ENCODE measurements at regions of chr17 and their contacts with region 1.

Region 1: GRCh38 chr17:40362696-40363110 is 1.8 kb downstream of the GJD3 start:
- DNase-seq: no peak
- ATAC-seq: peak; percentile 95
- H3K4me3 ChIP-seq: peak overlapping the region; percentile 65; the same call in 1 of the 2 replicates
- H3K27ac ChIP-seq: no peak overlapping the region
- H3K4me1 ChIP-seq: no peaks in the 10 kb centered on the region; the same call in none of the 2 replicates
- H3K27me3 ChIP-seq: peaks cover 0 to 2% of the 10 kb centered on the region in 2 experiments; a peak in 1 of 4 replicates
- CTCF ChIP-seq: peak; percentile 85
- EP300 ChIP-seq: no peak
- POLR2A ChIP-seq: peak; percentile 78
- RAD21 ChIP-seq: peak; percentile 64

Region 2: DNA sequence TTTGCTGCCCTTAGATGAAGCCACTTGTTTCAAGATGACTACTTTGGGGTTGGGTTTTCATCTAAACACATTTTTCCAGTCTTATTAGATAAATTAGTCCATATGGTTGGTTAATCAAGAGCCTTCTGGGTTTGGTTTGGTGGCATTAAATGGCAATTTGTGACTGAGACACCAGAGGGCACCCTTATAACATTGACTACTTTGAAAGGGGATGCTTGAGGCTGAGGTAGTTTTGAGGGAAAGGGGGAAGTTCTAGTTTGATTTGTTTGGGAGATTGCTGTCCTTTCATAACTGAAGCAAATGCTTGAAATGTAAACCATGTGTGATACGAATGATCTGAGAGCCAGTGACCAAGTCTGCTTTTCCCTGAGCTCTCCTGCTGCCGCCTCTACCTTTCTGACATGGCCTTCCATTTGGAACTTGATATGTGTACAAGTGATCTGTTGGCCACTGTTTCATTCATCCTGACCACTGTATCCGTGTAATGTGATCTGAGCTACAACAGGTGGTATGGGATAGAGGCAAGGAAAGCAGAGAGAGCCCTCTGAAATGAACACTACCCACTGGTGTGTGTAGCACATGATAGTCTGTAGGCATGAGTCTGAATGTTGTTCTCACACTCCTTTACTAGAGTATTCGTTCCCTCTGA is 59.6 kb before region 1 on chr17:
- CTCF ChIA-PET with region 1: interaction called, 311 read pairs
- POLR2A ChIA-PET with region 1: interaction called, 10 read pairs
- RAD21 ChIA-PET with region 1: interaction called, 271 read pairs
- SMC1A ChIA-PET with region 1: interaction called, 7 read pairs
- in situ Hi-C with region 1: no loop called
- intact Hi-C with region 1: no loop called
- DNase-seq: no peak
- ATAC-seq: peak; percentile 83
- H3K4me3 ChIP-seq: no peak overlapping the region
- H3K27ac ChIP-seq: no peak overlapping the region
- H3K4me1 ChIP-seq: peaks cover 5% of the 10 kb centered on the region; the same call in 1 of the 2 replicates
- H3K27me3 ChIP-seq: no peaks in the 10 kb centered on the region
- CTCF ChIP-seq: peak; percentile 62 to 80 (median 68); a peak in 5 of 6 replicates
- EP300 ChIP-seq: no peak
- POLR2A ChIP-seq: no peak; the same call in 1 of the 2 replicates
- RAD21 ChIP-seq: peak; percentile 96

Region 3: DNA sequence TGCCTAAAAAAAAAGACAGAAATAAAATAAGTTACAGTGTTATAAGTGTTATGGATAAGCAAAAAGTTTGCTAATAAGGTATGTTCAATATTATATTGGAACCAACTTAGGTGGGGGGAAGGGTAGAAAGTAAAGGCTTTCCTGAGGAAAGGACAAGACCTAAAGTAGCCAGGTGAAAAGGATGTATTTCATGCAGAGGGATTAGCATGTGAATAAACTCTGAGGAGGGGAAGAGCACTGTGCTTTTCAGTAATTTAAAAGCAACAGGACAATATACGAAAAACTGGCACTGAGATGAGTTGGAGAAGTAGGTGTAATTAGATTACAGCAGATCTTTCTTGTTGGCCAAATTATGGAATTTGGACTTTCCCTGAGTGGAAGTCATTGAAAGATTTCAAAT is 47.4 kb after region 1 on chr17:
- CTCF ChIA-PET with region 1: interaction called, 4 read pairs
- POLR2A ChIA-PET with region 1: interaction called, 12 read pairs
- RAD21 ChIA-PET with region 1: interaction called, 3 read pairs
- SMC1A ChIA-PET with region 1: interaction called, 5 read pairs
- in situ Hi-C with region 1: no loop called
- intact Hi-C with region 1: no loop called
- DNase-seq: no peak
- ATAC-seq: no peak
- H3K4me3 ChIP-seq: no peak overlapping the region
- H3K27ac ChIP-seq: no peak overlapping the region
- H3K4me1 ChIP-seq: no peaks in the 10 kb centered on the region
- H3K27me3 ChIP-seq: no peaks in the 10 kb centered on the region
- CTCF ChIP-seq: no peak
- EP300 ChIP-seq: no peak
- POLR2A ChIP-seq: no peak
- RAD21 ChIP-seq: no peak

Region 4: DNA sequence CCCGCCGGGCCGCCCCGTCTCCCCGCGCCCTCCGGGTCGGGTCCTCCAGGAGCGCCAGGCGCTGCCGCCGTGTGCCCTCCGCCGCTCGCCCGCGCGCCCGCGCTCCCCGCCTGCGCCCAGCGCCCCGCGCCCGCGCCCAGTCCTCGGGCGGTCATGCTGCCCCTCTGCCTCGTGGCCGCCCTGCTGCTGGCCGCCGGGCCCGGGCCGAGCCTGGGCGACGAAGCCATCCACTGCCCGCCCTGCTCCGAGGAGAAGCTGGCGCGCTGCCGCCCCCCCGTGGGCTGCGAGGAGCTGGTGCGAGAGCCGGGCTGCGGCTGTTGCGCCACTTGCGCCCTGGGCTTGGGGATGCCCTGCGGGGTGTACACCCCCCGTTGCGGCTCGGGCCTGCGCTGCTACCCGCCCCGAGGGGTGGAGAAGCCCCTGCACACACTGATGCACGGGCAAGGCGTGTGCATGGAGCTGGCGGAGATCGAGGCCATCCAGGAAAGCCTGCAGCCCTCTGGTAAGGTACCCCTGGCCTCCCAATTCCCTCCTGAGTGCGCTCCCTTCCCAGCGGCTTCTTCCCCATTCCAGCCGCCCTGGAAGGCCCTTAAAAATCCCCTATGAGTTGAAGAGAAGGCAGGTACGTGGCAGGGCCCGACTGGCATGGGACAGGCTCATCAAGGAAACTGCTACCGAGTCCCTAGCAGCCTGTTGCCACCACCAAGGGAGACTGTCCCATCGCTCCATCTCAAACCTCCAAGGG is 81.1 kb after region 1 on chr17:
- CTCF ChIA-PET with region 1: interaction called, 7 read pairs
- POLR2A ChIA-PET with region 1: interaction called, 3 read pairs
- RAD21 ChIA-PET with region 1: interaction called, 4 read pairs
- SMC1A ChIA-PET with region 1: interaction called, 5 read pairs
- in situ Hi-C with region 1: no loop called
- intact Hi-C with region 1: loop called (anchors 5 kb)
- DNase-seq: no peak
- ATAC-seq: peak; percentile 84
- H3K4me3 ChIP-seq: peak overlapping the region; percentile 61
- H3K27ac ChIP-seq: no peak overlapping the region
- H3K4me1 ChIP-seq: peaks cover 19% of the 10 kb centered on the region
- H3K27me3 ChIP-seq: peaks cover 0 to 16% of the 10 kb centered on the region in 2 experiments; a peak in 1 of 4 replicates
- CTCF ChIP-seq: peak; percentile 46 to 72 (median 71)
- EP300 ChIP-seq: no peak
- POLR2A ChIP-seq: no peak
- RAD21 ChIP-seq: peak; percentile 33; the same call in 1 of the 2 replicates

Region 5: GRCh38 chr17:40536295-40537171 is 173.8 kb after region 1 on chr17:
- CTCF ChIA-PET with region 1: interaction called, 75 read pairs
- POLR2A ChIA-PET with region 1: interaction called, 5 read pairs
- RAD21 ChIA-PET with region 1: interaction called, 29 read pairs
- SMC1A ChIA-PET with region 1: interaction called, 38 read pairs
- in situ Hi-C with region 1: loop called (anchors 5 kb)
- intact Hi-C with region 1: loop called (anchors 1 kb)
- DNase-seq: no peak
- ATAC-seq: no peak
- H3K4me3 ChIP-seq: no peak overlapping the region
- H3K27ac ChIP-seq: no peak overlapping the region
- H3K4me1 ChIP-seq: peaks cover 64% of the 10 kb centered on the region
- H3K27me3 ChIP-seq: no peaks in the 10 kb centered on the region; a peak in 1 of 4 replicates
- CTCF ChIP-seq: no peak
- EP300 ChIP-seq: no peak
- POLR2A ChIP-seq: no peak
- RAD21 ChIP-seq: no peak